H1 (cell line): ENCODE measurements at regions of chr10 and their contacts with region 1.

Region 1: DNA sequence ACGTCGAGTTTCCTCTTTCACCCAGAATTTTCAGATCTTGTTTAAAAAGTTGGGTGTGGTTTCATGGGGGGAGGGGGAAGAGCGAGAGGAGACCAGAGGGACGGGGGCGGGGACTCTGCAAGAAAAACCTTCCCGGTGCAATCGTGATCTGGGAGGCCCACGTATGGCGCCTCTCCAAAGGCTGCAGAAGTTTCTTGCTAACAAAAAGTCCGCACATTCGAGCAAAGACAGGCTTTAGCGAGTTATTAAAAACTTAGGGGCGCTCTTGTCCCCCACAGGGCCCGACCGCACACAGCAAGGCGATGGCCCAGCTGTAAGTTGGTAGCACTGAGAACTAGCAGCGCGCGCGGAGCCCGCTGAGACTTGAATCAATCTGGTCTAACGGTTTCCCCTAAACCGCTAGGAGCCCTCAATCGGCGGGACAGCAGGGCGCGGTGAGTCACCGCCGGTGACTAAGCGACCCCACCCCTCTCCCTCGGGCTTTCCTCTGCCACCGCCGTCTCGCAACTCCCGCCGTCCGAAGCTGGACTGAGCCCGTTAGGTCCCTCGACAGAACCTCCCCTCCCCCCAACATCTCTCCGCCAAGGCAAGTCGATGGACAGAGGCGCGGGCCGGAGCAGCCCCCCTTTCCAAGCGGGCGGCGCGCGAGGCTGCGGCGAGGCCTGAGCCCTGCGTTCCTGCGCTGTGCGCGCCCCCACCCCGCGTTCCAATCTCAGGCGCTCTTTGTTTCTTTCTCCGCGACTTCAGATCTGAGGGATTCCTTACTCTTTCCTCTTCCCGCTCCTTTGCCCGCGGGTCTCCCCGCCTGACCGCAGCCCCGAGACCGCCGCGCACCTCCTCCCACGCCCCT is at the start of gene VIM:
- DNase-seq: peak; percentile 79 to 82
- H3K4me3 ChIP-seq: peak within 1 kb of the TSS; percentile 69 to 81 (median 78)
- H3K27ac ChIP-seq: no peak within 1 kb of the TSS
- H3K4me1 ChIP-seq: peaks cover 10 to 17% (median 12%) of the 10 kb centered on the region in 4 experiments; a peak in 6 of 7 replicates
- H3K27me3 ChIP-seq: peaks cover 0 to 15% (median 13%) of the 10 kb centered on the region in 4 experiments; a peak in 5 of 7 replicates
- CTCF ChIP-seq: no peak
- EP300 ChIP-seq: peak in 1 of 2 experiments; percentile 18; a peak in 1 of 3 replicates
- POLR2A ChIP-seq: no peak
- RAD21 ChIP-seq: no peak
- total RNA-seq, gene VIM: 372 and 377 TPM in 2 replicates

Region 2: DNA sequence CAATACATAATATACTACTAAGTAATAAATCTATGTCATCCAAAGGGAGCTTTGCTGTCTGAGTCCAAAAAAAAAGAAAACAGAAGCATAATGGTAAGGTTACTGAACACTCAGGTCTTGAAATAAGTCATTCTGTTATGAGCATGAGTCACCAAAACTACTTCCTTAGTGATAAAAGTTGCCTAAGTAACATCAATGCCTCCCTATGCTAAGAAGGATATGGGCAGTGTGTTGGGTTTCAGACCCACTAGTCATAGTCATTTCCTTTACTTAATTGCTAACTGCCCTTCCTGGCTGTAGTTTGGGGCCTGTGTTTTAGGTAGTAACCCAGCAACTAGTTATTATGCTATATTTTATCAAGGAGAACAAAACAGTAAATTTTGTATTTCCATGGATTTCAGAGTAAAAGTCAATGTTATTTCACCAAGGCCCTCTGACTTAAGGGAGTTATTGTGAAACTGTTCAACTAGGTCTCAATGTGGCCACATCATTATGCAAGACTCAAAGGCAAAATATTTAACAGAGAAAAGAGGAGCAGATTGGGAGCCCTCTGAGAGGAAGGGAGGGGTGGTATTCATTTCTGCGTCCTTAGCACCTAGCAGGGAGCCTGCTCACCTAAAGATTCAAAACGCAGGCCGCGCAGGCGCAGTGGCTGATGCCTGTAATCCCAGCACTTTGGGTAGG is 12.0 kb before region 1 on chr10:
- CTCF ChIA-PET with region 1: interaction called, 13 read pairs
- POLR2A ChIA-PET with region 1: interaction called, 7 read pairs
- DNase-seq: no peak
- H3K4me3 ChIP-seq: no peak overlapping the region
- H3K27ac ChIP-seq: no peak overlapping the region
- H3K4me1 ChIP-seq: peaks cover 0 to 9% (median 7%) of the 10 kb centered on the region in 4 experiments; a peak in 4 of 7 replicates
- H3K27me3 ChIP-seq: no peaks in the 10 kb centered on the region
- CTCF ChIP-seq: no peak
- EP300 ChIP-seq: no peak
- POLR2A ChIP-seq: no peak
- RAD21 ChIP-seq: no peak

Region 3: GRCh38 chr10:17244700-17245365 is 16.5 kb after region 1 on chr10:
- CTCF ChIA-PET with region 1: interaction called, 12 read pairs
- POLR2A ChIA-PET with region 1: interaction called, 5 read pairs
- DNase-seq: no peak
- H3K4me3 ChIP-seq: no peak overlapping the region
- H3K27ac ChIP-seq: no peak overlapping the region
- H3K4me1 ChIP-seq: no peaks in the 10 kb centered on the region
- H3K27me3 ChIP-seq: no peaks in the 10 kb centered on the region
- CTCF ChIP-seq: no peak
- EP300 ChIP-seq: no peak
- POLR2A ChIP-seq: no peak
- RAD21 ChIP-seq: no peak

Region 4: DNA sequence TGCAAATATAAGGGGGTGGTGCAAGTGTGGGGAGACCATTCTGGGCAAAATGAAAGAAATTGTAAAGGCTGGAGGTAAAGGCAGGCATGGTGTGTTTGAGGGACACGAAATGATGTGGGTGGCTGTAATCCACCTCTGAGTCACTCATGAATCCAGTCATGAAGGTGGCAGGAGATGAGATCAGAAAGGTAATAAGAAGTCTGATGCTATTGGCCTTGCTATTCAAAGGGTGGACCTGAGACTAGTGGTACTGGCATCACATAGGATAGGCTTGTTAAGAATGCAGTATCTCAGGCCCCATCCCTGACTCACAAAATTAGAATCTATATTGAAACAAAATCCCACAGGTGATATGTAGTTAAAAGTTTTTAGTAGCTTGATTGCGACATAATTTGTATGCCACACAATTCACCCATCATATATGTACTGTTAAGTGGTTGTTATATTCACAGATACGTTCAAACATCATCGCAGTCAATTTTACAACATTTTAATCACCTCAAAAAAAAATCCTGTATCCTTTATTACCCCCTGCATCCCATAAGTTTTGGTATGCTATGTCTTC is 140.5 kb after region 1 on chr10:
- CTCF ChIA-PET with region 1: no interaction called
- POLR2A ChIA-PET with region 1: no interaction called
- DNase-seq: no peak
- H3K4me3 ChIP-seq: no peak overlapping the region
- H3K27ac ChIP-seq: no peak overlapping the region
- H3K4me1 ChIP-seq: no peaks in the 10 kb centered on the region
- H3K27me3 ChIP-seq: peaks cover 0 to 1% (median 0%) of the 10 kb centered on the region in 4 experiments; a peak in 1 of 7 replicates
- CTCF ChIP-seq: no peak
- EP300 ChIP-seq: no peak
- POLR2A ChIP-seq: no peak
- RAD21 ChIP-seq: no peak